CD8-positive, alpha-beta T cell (primary cell): ENCODE measurements at regions of chr1 and their contacts with region 1.

Region 1: DNA sequence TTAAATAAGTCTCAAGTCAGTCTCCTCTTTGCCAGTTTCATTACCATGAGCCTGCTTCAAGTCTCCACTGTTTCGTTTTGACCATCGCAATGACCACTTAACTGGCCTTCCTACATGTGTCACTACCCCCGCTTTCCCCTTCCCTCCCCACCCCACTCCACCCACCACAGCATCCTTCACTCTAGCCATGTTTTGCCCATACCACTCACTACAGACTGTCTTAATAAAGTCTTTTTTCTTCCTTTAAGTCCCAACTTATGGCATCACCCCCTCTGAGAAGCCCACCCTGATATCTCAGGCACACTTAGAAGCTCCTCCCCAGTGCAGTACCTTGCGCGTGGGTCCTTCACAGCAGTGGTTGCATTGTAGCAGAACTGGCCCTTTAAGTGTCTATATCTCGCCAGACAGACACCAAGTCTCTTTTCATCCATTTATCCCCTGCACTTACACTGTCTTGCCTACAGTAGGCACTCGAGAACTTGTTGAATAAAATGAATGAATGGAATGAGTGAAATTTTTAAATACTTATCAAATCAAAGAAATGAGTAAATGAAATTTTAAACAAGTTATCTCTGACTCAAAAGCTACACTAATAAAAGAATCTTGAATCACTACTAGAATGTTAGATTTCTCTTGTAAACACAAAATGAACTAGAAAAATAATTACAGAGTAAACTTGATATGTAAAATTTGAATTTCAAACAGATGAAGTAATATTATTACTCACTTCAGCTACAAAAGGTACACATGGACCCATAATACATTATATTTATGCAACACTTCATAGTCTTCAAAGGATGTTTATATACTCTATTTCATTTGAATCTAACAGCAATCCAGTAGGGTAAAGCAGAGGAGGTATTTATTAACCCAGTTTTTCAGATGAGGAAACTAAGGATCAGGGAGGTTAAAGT is 54.8 kb upstream of the MAN1A2 start:
- DNase-seq: peak in 2 of 9 experiments; percentile 39 to 46
- ATAC-seq: peak; percentile 75
- H3K4me3 ChIP-seq: no peak overlapping the region
- H3K4me3 Mint-ChIP-seq: no peak overlapping the region
- H3K27ac ChIP-seq: no peak overlapping the region
- H3K27ac Mint-ChIP-seq: no peak overlapping the region
- H3K4me1 ChIP-seq: no peaks in the 10 kb centered on the region
- H3K4me1 Mint-ChIP-seq: no peaks in the 10 kb centered on the region
- H3K27me3 ChIP-seq: no peaks in the 10 kb centered on the region
- H3K27me3 Mint-ChIP-seq: no peaks in the 10 kb centered on the region
- CTCF ChIP-seq: peak; percentile 62

Region 2: GRCh38 chr1:117077267-117077666 is 235.2 kb before region 1 on chr1:
- CTCF ChIA-PET with region 1: no interaction called
- POLR2A ChIA-PET with region 1: no interaction called
- intact Hi-C with region 1: no loop called
- DNase-seq: peak in 1 of 9 experiments; percentile 16
- ATAC-seq: no peak
- H3K4me3 ChIP-seq: no peak overlapping the region
- H3K4me3 Mint-ChIP-seq: no peak overlapping the region
- H3K27ac ChIP-seq: no peak overlapping the region
- H3K27ac Mint-ChIP-seq: no peak overlapping the region
- H3K4me1 ChIP-seq: no peaks in the 10 kb centered on the region
- H3K4me1 Mint-ChIP-seq: no peaks in the 10 kb centered on the region
- H3K27me3 ChIP-seq: no peaks in the 10 kb centered on the region
- H3K27me3 Mint-ChIP-seq: no peaks in the 10 kb centered on the region
- CTCF ChIP-seq: no peak

Region 3: GRCh38 chr1:117481410-117481809 is 168.9 kb after region 1 on chr1:
- CTCF ChIA-PET with region 1: no interaction called
- POLR2A ChIA-PET with region 1: no interaction called
- intact Hi-C with region 1: loop called in 1 of 2 experiments (anchors 10 kb)
- DNase-seq: no peak
- ATAC-seq: no peak
- H3K4me3 ChIP-seq: no peak overlapping the region
- H3K4me3 Mint-ChIP-seq: no peak overlapping the region
- H3K27ac ChIP-seq: no peak overlapping the region
- H3K27ac Mint-ChIP-seq: no peak overlapping the region
- H3K4me1 ChIP-seq: no peaks in the 10 kb centered on the region
- H3K4me1 Mint-ChIP-seq: no peaks in the 10 kb centered on the region
- H3K27me3 ChIP-seq: no peaks in the 10 kb centered on the region
- H3K27me3 Mint-ChIP-seq: no peaks in the 10 kb centered on the region
- CTCF ChIP-seq: no peak

Region 4: DNA sequence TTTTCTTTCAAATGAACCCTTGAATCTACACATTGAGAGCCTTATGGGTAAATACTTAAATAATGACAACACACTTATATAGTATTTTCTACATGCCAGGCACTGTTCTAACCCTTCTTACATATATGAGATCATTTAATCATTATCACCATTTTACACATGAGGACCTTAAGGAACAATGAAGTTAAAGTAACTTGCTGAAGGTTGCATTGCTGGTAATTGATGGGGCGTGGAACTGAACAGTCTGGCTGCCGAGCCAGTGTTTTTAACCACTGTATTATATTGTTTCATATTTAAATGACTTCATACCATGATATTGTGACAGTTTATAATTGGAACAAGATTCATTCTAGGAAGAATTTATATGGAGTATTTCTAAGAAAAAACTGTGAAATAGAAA is 181.4 kb after region 1 on chr1:
- CTCF ChIA-PET with region 1: interaction called, 5 read pairs
- POLR2A ChIA-PET with region 1: no interaction called
- intact Hi-C with region 1: loop called (anchors 5 to 10 kb)
- DNase-seq: no peak
- ATAC-seq: no peak
- H3K4me3 ChIP-seq: no peak overlapping the region
- H3K4me3 Mint-ChIP-seq: no peak overlapping the region
- H3K27ac ChIP-seq: no peak overlapping the region
- H3K27ac Mint-ChIP-seq: no peak overlapping the region
- H3K4me1 ChIP-seq: no peaks in the 10 kb centered on the region
- H3K4me1 Mint-ChIP-seq: no peaks in the 10 kb centered on the region
- H3K27me3 ChIP-seq: no peaks in the 10 kb centered on the region
- H3K27me3 Mint-ChIP-seq: no peaks in the 10 kb centered on the region
- CTCF ChIP-seq: no peak

Region 5: GRCh38 chr1:117826551-117827078 is 514.1 kb after region 1 on chr1:
- CTCF ChIA-PET with region 1: no interaction called
- POLR2A ChIA-PET with region 1: no interaction called
- intact Hi-C with region 1: no loop called
- DNase-seq: no peak
- ATAC-seq: no peak
- H3K4me3 ChIP-seq: no peak overlapping the region
- H3K4me3 Mint-ChIP-seq: no peak overlapping the region
- H3K27ac ChIP-seq: no peak overlapping the region
- H3K27ac Mint-ChIP-seq: no peak overlapping the region
- H3K4me1 ChIP-seq: no peaks in the 10 kb centered on the region
- H3K4me1 Mint-ChIP-seq: no peaks in the 10 kb centered on the region
- H3K27me3 ChIP-seq: peaks cover 0 to 2% of the 10 kb centered on the region in 2 experiments
- H3K27me3 Mint-ChIP-seq: peaks cover 8% of the 10 kb centered on the region
- CTCF ChIP-seq: no peak